ENCODE measurements at regions of chr12 and their contacts with region 1.

Region 1: DNA sequence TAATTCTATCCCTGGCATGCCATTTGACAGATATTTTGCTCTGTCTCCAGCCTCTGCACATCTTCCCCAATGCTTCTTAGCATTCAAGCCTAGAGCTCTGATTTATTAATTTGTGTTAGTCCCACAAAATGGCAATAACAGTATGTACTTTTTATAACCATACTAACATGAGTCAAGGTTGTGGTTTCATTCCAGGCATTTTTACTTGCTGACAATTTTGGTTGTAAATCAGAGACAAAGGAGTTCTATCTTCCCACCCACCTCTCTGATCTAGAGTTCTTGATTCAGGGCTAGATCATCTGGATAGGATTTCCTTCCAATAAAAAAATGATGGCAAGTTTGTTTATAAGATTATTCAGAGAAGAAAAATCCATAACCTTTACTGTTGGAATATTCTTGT is 18.5 kb upstream of the CISTR start:
- DNase-seq: peak; percentile 97
- ATAC-seq: peak; percentile 91
- H3K4me3 ChIP-seq: no peak overlapping the region
- H3K27ac ChIP-seq: peak overlapping the region; percentile 80
- H3K4me1 ChIP-seq: peaks cover 40% of the 10 kb centered on the region
- H3K27me3 ChIP-seq: no peaks in the 10 kb centered on the region
- CTCF ChIP-seq: no peak

Region 2: GRCh38 chr12:53825246-53826081 is 55.2 kb after region 1 on chr12:
- CTCF ChIA-PET with region 1: no interaction called
- POLR2A ChIA-PET with region 1: no interaction called
- intact Hi-C with region 1: loop called (anchors 1 kb)
- DNase-seq: peak; percentile 98
- ATAC-seq: peak; percentile 94
- H3K4me3 ChIP-seq: no peak overlapping the region
- H3K27ac ChIP-seq: peak overlapping the region; percentile 92
- H3K4me1 ChIP-seq: peaks cover 48% of the 10 kb centered on the region
- H3K27me3 ChIP-seq: no peaks in the 10 kb centered on the region
- CTCF ChIP-seq: no peak

Region 3: DNA sequence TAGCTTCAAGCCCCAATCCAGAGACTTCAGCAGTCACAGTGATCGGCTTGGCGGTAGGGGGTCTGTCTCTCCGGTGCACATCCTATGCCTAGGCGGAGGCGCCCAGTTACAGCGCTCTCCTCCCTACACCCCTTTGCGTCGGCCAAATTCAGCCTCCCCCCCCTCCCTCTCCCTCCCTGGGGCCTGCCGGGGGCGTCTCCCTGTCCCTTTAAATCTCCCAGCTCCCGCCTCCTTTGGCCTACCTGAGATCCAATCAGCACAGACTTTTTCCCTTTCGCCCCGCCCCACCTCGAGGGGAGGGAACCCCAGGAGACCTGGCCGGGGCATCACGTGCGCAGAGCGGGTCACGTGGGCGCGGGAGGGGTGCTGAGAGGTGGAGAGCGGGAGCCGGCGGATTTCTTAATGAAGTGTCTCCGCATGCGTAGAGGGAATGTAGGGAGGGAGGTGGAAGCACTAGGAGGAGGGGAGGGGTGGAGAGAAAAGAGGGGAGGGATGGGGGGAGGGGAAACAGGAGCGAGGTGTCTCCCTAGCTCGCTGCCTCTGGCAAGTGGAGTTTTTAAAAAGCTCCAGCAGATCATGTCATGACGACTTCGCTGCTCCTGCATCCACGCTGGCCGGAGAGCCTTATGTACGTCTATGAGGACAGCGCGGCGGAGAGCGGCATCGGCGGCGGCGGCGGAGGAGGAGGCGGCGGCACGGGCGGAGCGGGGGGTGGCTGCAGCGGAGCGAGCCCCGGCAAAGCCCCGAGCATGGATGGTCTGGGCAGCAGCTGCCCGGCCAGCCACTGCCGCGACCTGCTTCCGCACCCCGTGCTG is 168.3 kb after region 1 on chr12 and contains the start of gene HOXC13:
- CTCF ChIA-PET with region 1: no interaction called
- POLR2A ChIA-PET with region 1: no interaction called
- intact Hi-C with region 1: loop called (anchors 1 kb)
- DNase-seq: peak; percentile 99
- ATAC-seq: peak; percentile 82
- H3K4me3 ChIP-seq: peak within 1 kb of the TSS; percentile 87
- H3K27ac ChIP-seq: no peak within 1 kb of the TSS
- H3K4me1 ChIP-seq: peaks cover 25% of the 10 kb centered on the region
- H3K27me3 ChIP-seq: no peaks in the 10 kb centered on the region
- CTCF ChIP-seq: no peak
- total RNA-seq, gene HOXC13: 7.8 and 9.0 TPM in 2 replicates

Region 4: GRCh38 chr12:53952871-53953734 is 182.8 kb after region 1 on chr12:
- CTCF ChIA-PET with region 1: no interaction called
- POLR2A ChIA-PET with region 1: no interaction called
- intact Hi-C with region 1: loop called (anchors 2 kb)
- DNase-seq: peak; percentile 55
- ATAC-seq: peak; percentile 44
- H3K4me3 ChIP-seq: peak overlapping the region; percentile 54
- H3K27ac ChIP-seq: no peak overlapping the region
- H3K4me1 ChIP-seq: peaks cover 13% of the 10 kb centered on the region
- H3K27me3 ChIP-seq: no peaks in the 10 kb centered on the region
- CTCF ChIP-seq: no peak

Region 5: GRCh38 chr12:53978477-53979356 is 208.4 kb after region 1 on chr12:
- CTCF ChIA-PET with region 1: no interaction called
- POLR2A ChIA-PET with region 1: no interaction called
- intact Hi-C with region 1: loop called (anchors 2 kb)
- DNase-seq: peak; percentile 78
- ATAC-seq: peak; percentile 80
- H3K4me3 ChIP-seq: peak overlapping the region; percentile 19; the same call in 1 of the 2 replicates
- H3K27ac ChIP-seq: no peak overlapping the region
- H3K4me1 ChIP-seq: peaks cover 22% of the 10 kb centered on the region
- H3K27me3 ChIP-seq: no peaks in the 10 kb centered on the region
- CTCF ChIP-seq: no peak

Region 6: DNA sequence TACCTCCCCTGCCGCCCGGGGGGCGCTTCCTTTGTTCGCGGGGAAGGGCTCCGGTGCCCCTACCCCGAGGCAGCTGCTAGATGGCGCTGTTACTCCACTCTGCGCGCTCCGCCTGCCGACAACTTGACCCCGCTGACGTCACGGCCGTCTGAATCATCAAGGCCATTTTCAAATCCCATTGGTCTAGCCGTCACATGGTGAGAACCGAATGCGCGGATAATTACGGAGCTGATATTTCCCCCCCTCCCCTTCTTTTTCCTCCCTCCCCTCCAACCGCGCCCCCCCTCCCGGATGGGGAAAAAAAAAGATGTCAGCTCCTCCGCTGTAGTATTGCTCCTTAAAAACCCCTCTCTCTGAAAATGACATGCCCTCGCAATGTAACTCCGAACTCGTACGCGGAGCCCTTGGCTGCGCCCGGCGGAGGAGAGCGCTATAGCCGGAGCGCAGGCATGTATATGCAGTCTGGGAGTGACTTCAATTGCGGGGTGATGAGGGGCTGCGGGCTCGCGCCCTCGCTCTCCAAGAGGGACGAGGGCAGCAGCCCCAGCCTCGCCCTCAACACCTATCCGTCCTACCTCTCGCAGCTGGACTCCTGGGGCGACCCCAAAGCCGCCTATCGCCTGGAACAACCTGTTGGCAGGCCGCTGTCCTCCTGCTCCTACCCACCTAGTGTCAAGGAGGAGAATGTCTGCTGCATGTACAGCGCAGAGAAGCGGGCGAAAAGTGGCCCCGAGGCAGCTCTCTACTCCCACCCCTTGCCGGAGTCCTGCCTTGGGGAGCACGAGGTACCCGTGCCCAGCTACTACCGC is 214.8 kb after region 1 on chr12 and contains the start of gene HOXC10:
- CTCF ChIA-PET with region 1: no interaction called
- POLR2A ChIA-PET with region 1: no interaction called
- intact Hi-C with region 1: loop called (anchors 1 kb)
- DNase-seq: peak; percentile 93
- ATAC-seq: peak; percentile 64
- H3K4me3 ChIP-seq: peak within 1 kb of the TSS; percentile 46; the same call in 1 of the 2 replicates
- H3K27ac ChIP-seq: no peak within 1 kb of the TSS
- H3K4me1 ChIP-seq: peaks cover 26% of the 10 kb centered on the region
- H3K27me3 ChIP-seq: no peaks in the 10 kb centered on the region
- CTCF ChIP-seq: peak; percentile 71
- total RNA-seq, gene HOXC10: 0.69 and 2.9 TPM in 2 replicates

Region 7: GRCh38 chr12:54017878-54018467 is 247.7 kb after region 1 on chr12:
- CTCF ChIA-PET with region 1: no interaction called
- POLR2A ChIA-PET with region 1: no interaction called
- intact Hi-C with region 1: no loop called
- DNase-seq: peak; percentile 86
- ATAC-seq: peak; percentile 73
- H3K4me3 ChIP-seq: peak overlapping the region; percentile 96
- H3K27ac ChIP-seq: peak overlapping the region; percentile 38
- H3K4me1 ChIP-seq: peaks cover 21% of the 10 kb centered on the region
- H3K27me3 ChIP-seq: no peaks in the 10 kb centered on the region
- CTCF ChIP-seq: no peak

Region 8: GRCh38 chr12:54201001-54201794 is 430.9 kb after region 1 on chr12:
- CTCF ChIA-PET with region 1: no interaction called
- POLR2A ChIA-PET with region 1: no interaction called
- intact Hi-C with region 1: loop called (anchors 5 kb)
- DNase-seq: peak; percentile 77
- ATAC-seq: peak; percentile 89
- H3K4me3 ChIP-seq: no peak overlapping the region
- H3K27ac ChIP-seq: no peak overlapping the region
- H3K4me1 ChIP-seq: peaks cover 8% of the 10 kb centered on the region
- H3K27me3 ChIP-seq: no peaks in the 10 kb centered on the region
- CTCF ChIP-seq: peak; percentile 90